Activated CD4-positive, alpha-beta memory T cell treated with anti-CD3 and anti-CD28 coated beads, Interleukin-2, amount 10 ng/mL, durations not matched to agents 7 days and 5 days (primary cell): ENCODE measurements at regions of chr19 and their contacts with region 1.

Region 1: DNA sequence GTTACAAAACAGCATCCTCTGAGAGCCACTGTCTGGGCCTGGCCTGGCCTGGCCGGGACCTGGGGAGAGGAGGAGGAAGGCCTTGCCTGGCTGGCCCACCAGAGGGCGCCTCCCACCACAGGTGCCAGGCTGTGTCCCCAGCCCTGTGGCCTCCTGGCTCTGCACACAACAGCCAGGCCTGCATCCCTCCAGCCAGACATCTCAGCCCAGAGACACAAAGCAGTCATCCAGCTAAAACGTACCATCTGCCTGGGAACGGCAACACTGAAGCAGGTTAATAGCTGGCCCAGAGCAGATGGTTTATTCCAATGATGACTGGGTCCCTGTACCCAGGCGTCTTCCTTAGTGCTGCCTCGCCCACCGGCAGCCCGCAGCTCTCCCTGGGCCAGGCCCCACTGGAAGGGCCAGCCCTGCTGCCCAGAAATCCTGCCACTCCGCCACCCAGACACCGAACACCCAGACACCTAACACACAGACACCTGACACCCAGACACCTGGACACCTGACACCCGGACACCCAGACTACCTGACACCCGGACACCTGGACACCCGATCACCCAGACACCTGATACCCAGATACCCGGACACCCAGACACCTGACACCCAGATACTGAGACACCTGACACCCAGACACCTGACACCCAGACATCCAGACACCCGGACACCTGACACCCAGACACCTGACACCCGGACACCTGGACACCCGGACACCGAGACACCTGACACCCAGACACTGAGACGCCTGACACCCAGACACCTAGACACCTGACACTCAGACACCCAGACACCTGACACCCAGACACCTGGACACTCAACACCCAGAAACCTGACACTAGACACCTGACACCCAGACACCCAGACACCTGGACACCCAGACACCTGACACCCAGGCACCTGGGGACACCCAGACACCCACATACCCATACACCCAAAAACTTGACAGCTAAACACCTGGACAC is 20.1 kb downstream of the C19orf12 start:
- DNase-seq: peak; percentile 85
- H3K4me3 Mint-ChIP-seq: no peak overlapping the region
- H3K27ac Mint-ChIP-seq: peak overlapping the region; percentile 49
- H3K4me1 Mint-ChIP-seq: peaks cover 19% of the 10 kb centered on the region
- H3K27me3 Mint-ChIP-seq: no peaks in the 10 kb centered on the region

Region 2: DNA sequence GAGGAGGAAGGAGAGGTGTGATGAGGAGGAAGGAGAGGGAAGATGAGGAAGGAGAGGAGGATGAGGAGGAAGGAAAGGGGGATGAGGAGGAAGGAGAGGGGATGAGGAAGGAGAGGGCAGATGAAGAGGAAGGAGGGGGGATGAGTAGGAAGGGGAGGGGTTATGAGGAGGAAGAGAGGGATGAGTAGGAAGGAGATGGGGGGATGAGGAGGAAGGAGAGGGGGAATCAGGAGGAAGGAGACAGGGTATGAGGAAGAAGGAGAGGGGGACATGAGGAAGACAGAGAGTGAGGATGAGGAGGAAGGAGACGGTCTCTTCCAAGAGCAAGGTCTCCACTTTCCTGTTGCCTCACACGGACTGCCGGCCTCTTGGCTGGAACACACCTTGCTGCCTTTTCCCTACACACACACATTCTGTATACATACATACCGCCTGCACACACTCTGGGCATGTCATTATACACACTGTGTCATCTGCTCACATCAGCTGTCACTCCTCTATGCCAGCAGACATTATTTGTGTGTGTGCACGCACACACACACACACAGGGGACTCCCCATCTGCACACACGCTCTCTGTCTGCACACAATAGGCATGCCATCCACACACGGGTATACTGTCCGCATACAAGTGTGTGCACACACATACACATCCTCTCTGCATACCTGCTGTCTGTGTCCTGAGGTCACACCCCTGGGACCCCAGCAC is 180.3 kb before region 1 on chr19:
- CTCF ChIA-PET with region 1: no interaction called
- POLR2A ChIA-PET with region 1: no interaction called
- DNase-seq: no peak
- H3K4me3 Mint-ChIP-seq: no peak overlapping the region
- H3K27ac Mint-ChIP-seq: no peak overlapping the region
- H3K4me1 Mint-ChIP-seq: no peaks in the 10 kb centered on the region
- H3K27me3 Mint-ChIP-seq: no peaks in the 10 kb centered on the region

Region 3: GRCh38 chr19:29655648-29656320 is 39.2 kb before region 1 on chr19:
- CTCF ChIA-PET with region 1: no interaction called
- POLR2A ChIA-PET with region 1: no interaction called
- DNase-seq: no peak
- H3K4me3 Mint-ChIP-seq: no peak overlapping the region
- H3K27ac Mint-ChIP-seq: no peak overlapping the region
- H3K4me1 Mint-ChIP-seq: peaks cover 12% of the 10 kb centered on the region
- H3K27me3 Mint-ChIP-seq: peaks cover 16% of the 10 kb centered on the region

Region 4: GRCh38 chr19:29671393-29672160 is 23.4 kb before region 1 on chr19:
- CTCF ChIA-PET with region 1: interaction called, 23 read pairs
- POLR2A ChIA-PET with region 1: interaction called, 6 read pairs
- DNase-seq: peak; percentile 94
- H3K4me3 Mint-ChIP-seq: peak overlapping the region; percentile 65
- H3K27ac Mint-ChIP-seq: peak overlapping the region; percentile 97
- H3K4me1 Mint-ChIP-seq: peaks cover 93% of the 10 kb centered on the region
- H3K27me3 Mint-ChIP-seq: no peaks in the 10 kb centered on the region